ENCODE measurements at regions of chr10 and their contacts with region 1.

Region 1: GRCh38 chr10:86888585-86889381 is 68.6 kb downstream of the MMRN2 start:
- DNase-seq: no peak
- H3K4me3 ChIP-seq: no peak overlapping the region
- H3K27ac ChIP-seq: peak overlapping the region; percentile 24 to 65
- H3K4me1 ChIP-seq: peaks cover 0 to 26% (median 8%) of the 10 kb centered on the region in 4 donors
- H3K27me3 ChIP-seq: no peaks in the 10 kb centered on the region
- CTCF ChIP-seq: no peak

Region 2: DNA sequence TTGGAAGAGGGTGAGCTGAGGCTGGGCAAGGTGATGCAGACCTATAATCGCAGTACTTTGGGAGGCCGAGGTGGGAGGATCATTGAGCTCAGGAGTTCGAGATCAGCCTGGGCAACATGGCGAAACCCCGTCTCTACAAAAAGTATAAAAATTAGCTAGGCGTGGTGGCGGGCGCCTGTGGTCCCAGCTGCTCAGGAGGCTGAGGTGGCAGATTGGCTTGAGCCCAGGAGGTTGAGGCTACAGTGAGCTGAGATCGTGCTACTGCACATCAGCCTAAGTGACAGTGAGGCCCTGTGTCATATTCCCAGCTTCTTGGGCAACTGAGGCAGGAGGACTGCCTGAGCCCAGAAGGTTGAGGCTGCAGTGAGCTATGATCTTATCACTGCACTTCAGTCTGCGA is 118.8 kb before region 1 on chr10:
- intact Hi-C with region 1: loop called (anchors 10 kb)
- DNase-seq: no peak
- H3K4me3 ChIP-seq: no peak overlapping the region
- H3K27ac ChIP-seq: no peak overlapping the region
- H3K4me1 ChIP-seq: peaks cover 0 to 100% (median 32%) of the 10 kb centered on the region in 4 donors
- H3K27me3 ChIP-seq: no peaks in the 10 kb centered on the region
- CTCF ChIP-seq: no peak

Measured in tibial artery (tissue), 4 donors.